Posterior cingulate gyrus (tissue), 11 donors: ENCODE measurements at regions of chr1 and their contacts with region 1.

Region 1: DNA sequence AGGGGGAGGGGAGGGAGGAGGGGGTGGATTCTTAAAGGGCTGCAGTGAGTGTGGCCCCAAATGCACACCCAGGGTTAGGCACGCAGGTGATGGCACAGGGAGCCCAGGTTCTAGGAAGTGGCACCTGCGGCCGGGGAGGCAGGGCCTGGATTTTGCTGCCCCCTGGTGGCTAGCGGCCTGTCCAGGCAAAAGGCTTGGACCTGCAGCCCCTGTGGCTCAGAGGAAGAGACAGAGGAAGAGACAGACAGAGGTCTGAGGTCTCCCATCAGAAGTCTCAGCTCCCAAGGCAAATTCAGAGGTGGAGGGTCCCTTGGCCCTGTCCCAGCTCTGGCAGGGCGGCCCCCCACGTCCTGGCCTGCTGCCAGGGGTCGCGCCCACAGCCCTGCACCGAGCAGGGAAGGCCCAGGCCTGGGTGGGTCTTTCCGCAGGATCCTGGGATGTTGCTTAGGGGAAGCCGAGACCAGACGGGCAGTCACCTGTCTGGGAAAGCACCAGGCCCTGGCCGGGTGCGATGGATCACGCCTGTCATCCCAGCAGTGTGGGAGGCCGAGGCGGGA is 8.1 kb upstream of the TNFRSF14 start:
- DNase-seq: peak; percentile 72 to 97 (median 84)

Region 2: GRCh38 chr1:2412519-2413233 is 135.4 kb before region 1 on chr1 and contains the start of gene PEX10:
- intact Hi-C with region 1: loop called (anchors 1 kb)
- DNase-seq: peak; percentile 93 to 100 (median 96)

Region 3: DNA sequence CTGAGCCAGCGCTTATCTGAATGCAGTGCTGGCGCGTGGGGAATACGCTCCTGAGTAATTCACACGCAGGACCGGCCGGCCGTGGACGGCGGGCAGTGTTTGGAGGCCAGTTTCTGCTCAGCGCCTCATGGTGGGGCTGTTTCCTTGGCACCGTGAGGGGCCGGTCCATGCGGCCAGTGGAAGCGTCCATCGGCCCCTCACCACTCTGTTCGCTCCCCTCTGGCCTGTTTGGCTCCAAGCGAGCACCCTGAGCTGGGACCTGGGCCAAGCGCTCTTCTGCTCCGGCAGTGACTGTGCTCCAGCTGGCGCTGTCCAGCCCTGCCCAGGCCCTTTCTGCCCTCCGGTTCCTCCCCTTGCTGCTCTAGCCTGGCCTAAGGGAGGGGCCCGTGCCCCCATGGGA is 88.4 kb before region 1 on chr1:
- intact Hi-C with region 1: loop called (anchors 5 kb)
- DNase-seq: peak; percentile 70 to 97 (median 78)

Region 4: GRCh38 chr1:2611031-2611501 is 63.0 kb after region 1 on chr1:
- intact Hi-C with region 1: no loop called
- DNase-seq: peak in 5 of 10 donors; percentile 17 to 90 (median 73)